ENCODE measurements at regions of chr13 and their contacts with region 1.

Region 1: DNA sequence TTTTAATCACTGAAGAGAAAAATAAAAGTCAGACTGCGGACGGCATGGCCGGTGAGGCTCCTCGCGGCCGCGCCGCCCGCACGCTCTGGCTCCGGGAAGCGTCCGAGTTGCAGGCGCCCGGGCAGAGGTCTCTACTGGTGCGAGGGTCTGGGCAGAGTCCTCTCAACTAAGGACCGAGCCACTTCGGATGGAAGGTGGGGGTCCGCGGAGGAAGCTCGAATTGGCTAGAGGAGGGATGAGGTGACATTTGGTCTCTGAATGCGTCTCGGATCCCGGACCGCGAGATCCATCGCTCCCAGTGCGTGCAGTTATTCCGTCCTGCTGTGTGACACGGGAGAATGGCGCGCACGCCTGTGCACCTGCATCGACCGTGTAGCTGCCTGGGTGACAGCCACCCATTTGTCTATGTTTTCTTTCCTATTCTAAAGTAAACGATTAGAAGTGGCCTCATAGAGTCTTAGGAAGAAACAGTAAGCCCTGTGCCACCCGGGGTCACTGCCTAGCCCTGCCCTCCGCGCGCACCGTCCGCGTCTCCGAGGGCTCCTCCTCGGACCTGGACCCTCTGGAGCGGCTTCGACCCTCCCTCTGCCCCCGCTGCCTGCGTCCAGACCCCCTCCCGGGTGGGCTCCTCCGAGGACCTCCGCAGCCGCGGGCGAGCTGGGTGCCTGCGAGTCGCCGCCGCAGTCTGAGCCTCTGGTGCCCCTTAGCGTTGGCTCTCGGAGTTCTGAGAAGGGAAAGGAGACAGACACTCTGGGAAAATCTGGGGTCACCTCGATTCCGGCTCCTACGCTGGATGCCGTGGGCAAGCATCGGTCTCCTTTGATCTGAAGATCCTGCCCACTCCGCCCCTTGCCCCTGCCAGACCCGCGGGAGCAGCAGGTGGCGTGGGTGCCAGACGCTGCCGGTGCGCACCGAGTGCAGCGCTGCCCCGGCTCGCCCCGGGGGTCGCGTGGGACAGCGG is 347.4 kb downstream of the LIG4 start:
- DNase-seq: peak; percentile 64
- H3K4me3 ChIP-seq: peak overlapping the region; percentile 51 to 82 (median 54)
- H3K27ac ChIP-seq: peak overlapping the region; percentile 56
- H3K4me1 ChIP-seq: peaks cover 15% of the 10 kb centered on the region
- H3K27me3 ChIP-seq: peaks cover 5 to 8% of the 10 kb centered on the region in 2 experiments
- CTCF ChIP-seq: peak; percentile 52 to 77
- POLR2A ChIP-seq: no peak

Region 2: GRCh38 chr13:107301724-107302374 is 566.1 kb before region 1 on chr13:
- CTCF ChIA-PET with region 1: interaction called, 9 read pairs
- POLR2A ChIA-PET with region 1: no interaction called
- dilution Hi-C with region 1: no loop called
- intact Hi-C with region 1: loop called (anchors 5 kb)
- DNase-seq: peak; percentile 17
- H3K4me3 ChIP-seq: no peak overlapping the region
- H3K27ac ChIP-seq: no peak overlapping the region
- H3K4me1 ChIP-seq: no peaks in the 10 kb centered on the region
- H3K27me3 ChIP-seq: no peaks in the 10 kb centered on the region
- CTCF ChIP-seq: peak in 1 of 2 donors; percentile 2
- POLR2A ChIP-seq: no peak

Region 3: DNA sequence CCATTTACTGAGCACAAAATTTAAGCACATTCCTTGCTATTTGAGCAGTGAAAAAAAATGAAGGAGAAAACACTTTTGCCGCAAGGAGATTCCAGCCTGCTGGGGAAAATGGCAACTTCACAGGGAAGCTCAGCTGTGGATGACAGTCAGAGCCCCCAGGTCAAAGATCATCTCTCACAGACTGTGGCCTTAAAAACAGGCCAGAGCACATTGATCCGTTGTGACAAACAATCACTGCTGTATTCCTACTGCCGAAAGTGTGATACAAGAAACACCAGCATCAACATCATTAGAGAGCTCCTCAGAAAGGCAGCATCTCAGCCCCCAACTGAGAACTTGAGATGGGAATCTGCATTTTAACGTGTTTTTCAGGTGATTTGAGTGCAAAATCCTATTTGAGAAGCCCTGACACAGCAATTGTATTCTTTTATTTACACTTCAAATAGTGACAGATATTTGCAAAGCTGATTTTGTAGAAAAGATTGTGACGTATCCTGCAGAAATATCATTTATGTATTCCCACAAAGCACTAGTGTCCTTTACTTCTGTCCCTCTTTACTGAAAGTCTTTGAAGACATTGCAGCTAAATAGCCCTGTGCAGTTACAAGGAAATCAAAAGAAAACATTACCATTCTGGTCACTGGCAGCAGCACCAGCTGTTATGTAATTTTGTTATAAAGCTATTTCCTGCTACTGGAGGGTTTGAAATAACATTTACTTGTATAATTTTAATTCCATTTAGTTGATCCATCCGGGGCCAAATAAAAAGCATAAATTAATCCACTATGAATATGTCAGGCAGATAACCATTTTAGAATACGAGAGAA is 304.7 kb before region 1 on chr13:
- CTCF ChIA-PET with region 1: no interaction called
- POLR2A ChIA-PET with region 1: no interaction called
- dilution Hi-C with region 1: no loop called
- intact Hi-C with region 1: loop called (anchors 10 kb)
- DNase-seq: peak; percentile 52
- H3K4me3 ChIP-seq: no peak overlapping the region
- H3K27ac ChIP-seq: no peak overlapping the region
- H3K4me1 ChIP-seq: peaks cover 5% of the 10 kb centered on the region
- H3K27me3 ChIP-seq: no peaks in the 10 kb centered on the region
- CTCF ChIP-seq: no peak
- POLR2A ChIP-seq: no peak

Region 4: DNA sequence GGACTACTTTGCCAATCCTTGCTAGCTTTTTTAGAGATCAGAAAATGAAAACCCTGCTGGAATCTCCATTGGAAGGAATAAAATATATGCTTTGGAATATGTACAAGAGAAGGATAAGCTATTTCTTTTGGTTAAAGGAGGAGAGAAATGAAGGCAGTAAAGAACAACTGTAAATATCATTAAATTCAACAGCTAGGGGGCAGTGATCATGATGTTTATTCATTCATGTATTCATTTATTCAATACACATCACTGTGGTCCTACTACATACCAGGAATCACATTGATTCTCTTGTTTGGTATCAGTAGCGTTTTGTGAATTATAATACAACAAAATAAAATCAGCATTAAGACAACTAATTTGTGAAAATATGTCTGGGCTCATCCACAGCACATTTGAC is 127.2 kb before region 1 on chr13:
- CTCF ChIA-PET with region 1: interaction called, 7 read pairs
- POLR2A ChIA-PET with region 1: no interaction called
- dilution Hi-C with region 1: no loop called
- intact Hi-C with region 1: loop called (anchors 1 kb)
- DNase-seq: no peak
- H3K4me3 ChIP-seq: no peak overlapping the region
- H3K27ac ChIP-seq: no peak overlapping the region
- H3K4me1 ChIP-seq: no peaks in the 10 kb centered on the region
- H3K27me3 ChIP-seq: no peaks in the 10 kb centered on the region
- CTCF ChIP-seq: no peak
- POLR2A ChIP-seq: no peak

Region 5: DNA sequence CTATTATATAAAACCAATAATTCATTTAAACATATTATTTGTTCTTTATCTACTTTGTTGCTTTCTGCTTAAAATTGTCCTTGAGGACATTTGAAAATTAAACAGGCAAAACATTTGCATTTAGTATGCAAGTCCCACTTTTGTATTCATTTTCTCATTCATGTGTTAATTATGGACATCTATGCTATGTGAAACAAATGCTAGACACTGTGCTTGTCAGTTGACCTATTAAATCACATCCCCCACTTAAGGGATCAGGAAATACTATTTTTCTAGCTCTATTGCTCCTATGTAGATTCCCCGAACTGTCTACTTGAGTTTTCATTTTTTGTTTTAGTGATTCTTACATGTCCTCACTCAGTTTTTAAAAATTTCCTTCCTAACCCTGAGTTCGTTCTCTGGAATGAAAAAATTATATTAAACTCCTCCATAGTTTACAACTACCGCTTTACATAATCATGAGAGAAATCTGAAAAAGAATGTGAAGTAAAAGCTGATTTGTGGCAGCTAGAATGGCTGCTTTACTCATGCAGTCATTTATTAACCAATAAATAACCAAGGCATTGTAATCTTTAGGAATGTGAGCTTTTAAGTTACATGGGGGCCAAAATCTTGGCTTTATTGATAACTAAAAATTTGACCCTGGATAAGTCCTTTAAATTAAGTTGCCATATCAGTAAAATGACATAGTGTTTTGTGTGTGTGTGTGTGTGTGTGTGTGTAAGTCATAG is 158.9 kb after region 1 on chr13:
- CTCF ChIA-PET with region 1: no interaction called
- POLR2A ChIA-PET with region 1: no interaction called
- dilution Hi-C with region 1: no loop called
- intact Hi-C with region 1: no loop called
- DNase-seq: no peak
- H3K4me3 ChIP-seq: no peak overlapping the region
- H3K27ac ChIP-seq: no peak overlapping the region
- H3K4me1 ChIP-seq: no peaks in the 10 kb centered on the region
- H3K27me3 ChIP-seq: no peaks in the 10 kb centered on the region
- CTCF ChIP-seq: no peak
- POLR2A ChIP-seq: no peak

Region 6: GRCh38 chr13:108155185-108156106 is 287.5 kb after region 1 on chr13:
- CTCF ChIA-PET with region 1: interaction called, 5 read pairs
- POLR2A ChIA-PET with region 1: no interaction called
- dilution Hi-C with region 1: no loop called
- intact Hi-C with region 1: loop called (anchors 5 kb)
- DNase-seq: peak; percentile 60
- H3K4me3 ChIP-seq: no peak overlapping the region
- H3K27ac ChIP-seq: no peak overlapping the region
- H3K4me1 ChIP-seq: no peaks in the 10 kb centered on the region
- H3K27me3 ChIP-seq: no peaks in the 10 kb centered on the region
- CTCF ChIP-seq: peak; percentile 72 to 79
- POLR2A ChIP-seq: no peak

Region 7: DNA sequence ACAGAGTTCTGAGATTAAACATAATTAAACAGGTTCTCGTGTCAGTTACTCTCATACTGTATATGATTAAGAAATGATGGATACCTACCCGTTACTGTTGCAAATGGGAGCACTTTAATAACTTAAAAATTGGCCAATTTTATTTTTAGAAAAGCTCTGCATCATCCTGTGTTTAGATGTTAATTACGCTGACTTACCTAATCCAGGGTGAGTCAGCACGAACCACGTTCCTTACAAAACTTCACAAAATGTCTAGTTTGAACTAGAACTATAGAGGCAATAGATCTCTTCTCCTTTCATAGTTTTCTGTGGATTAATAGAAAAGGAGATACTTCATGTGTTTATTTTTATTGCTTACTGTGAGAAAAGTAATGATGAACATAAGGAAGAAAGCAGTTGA is 1125.4 kb after region 1 on chr13:
- CTCF ChIA-PET with region 1: no interaction called
- POLR2A ChIA-PET with region 1: no interaction called
- dilution Hi-C with region 1: no loop called
- intact Hi-C with region 1: no loop called
- DNase-seq: no peak
- H3K4me3 ChIP-seq: no peak overlapping the region
- H3K27ac ChIP-seq: no peak overlapping the region
- H3K4me1 ChIP-seq: no peaks in the 10 kb centered on the region
- H3K27me3 ChIP-seq: no peaks in the 10 kb centered on the region
- CTCF ChIP-seq: no peak
- POLR2A ChIP-seq: no peak

Measured in endothelial cell of umbilical vein (primary cell).